ENCODE measurements at regions of chr15 and their contacts with region 1.

Region 1: DNA sequence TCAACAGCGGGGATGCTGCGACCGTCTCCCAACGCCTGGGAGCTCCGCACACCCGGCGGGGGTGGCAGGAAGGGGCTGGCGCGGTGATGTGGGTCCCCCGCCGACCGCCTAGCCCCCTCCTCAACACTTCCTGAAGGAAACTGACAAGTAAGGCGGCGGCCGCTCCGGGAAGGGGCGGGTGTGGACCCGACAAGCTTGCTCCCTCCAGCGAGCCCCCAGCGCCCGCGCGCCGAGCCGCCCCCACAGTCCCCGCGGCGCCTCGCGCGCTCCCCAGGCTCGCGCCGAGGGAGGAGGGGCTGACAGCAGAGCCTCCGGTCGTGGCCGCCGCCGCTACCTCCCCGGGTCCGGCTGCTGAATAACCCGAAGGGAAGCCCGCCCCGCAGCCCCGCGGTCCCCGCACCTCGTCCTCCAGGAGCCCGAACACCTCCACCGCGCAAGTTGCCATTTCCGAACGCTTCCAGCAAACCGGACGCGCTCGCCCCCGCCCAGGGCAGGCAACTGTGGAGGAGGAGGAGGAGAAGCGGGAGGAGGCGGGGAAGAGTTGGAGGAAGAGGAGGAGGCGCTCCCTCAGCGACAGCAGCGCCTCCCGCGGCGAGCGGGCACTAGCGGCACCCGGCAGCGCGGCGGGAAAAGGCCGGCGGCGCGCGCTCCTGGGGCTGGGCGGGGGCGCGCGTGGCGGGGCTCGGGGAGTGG is at the start of gene NEDD4:
- DNase-seq: peak; percentile 93
- H3K4me3 ChIP-seq: peak within 1 kb of the TSS; percentile 81 to 92 (median 86)
- H3K27ac ChIP-seq: peak within 1 kb of the TSS; percentile 91 to 97 (median 97)
- H3K4me1 ChIP-seq: peaks cover 0 to 23% (median 18%) of the 10 kb centered on the region in 4 donors
- H3K27me3 ChIP-seq: no peaks in the 10 kb centered on the region
- CTCF ChIP-seq: peak; percentile 17 to 42 (median 23)
- EP300 ChIP-seq: no peak
- POLR2A ChIP-seq: peak in 1 of 2 donors; percentile 25
- total RNA-seq, gene NEDD4: 19.4 to 28.6 (median 25.4) TPM

Region 2: GRCh38 chr15:55606214-55606613 is 387.0 kb before region 1 on chr15:
- intact Hi-C with region 1: no loop called
- DNase-seq: no peak
- H3K4me3 ChIP-seq: no peak overlapping the region
- H3K27ac ChIP-seq: no peak overlapping the region
- H3K4me1 ChIP-seq: no peaks in the 10 kb centered on the region
- H3K27me3 ChIP-seq: no peaks in the 10 kb centered on the region
- CTCF ChIP-seq: no peak
- EP300 ChIP-seq: no peak
- POLR2A ChIP-seq: no peak

Region 3: DNA sequence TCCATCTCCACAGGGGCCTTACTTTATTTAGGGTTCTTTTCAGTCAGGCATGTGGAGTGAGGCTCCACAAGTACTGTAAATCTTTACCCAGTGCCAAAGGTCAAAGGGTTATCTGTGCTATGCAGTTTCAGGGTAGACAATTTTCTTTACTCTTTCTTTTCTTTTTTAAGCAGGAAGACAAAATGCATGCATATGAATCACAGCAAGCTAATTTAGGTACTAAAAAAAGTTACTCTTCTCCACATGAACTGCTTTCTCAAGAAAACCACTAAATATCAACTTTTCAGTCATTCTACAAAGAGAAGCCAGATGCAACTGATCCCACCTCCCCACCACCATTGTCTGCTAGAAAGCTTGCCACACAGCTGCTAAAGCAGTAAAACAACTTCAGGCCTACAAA is 331.8 kb before region 1 on chr15:
- intact Hi-C with region 1: no loop called
- DNase-seq: no peak
- H3K4me3 ChIP-seq: no peak overlapping the region
- H3K27ac ChIP-seq: no peak overlapping the region
- H3K4me1 ChIP-seq: no peaks in the 10 kb centered on the region
- H3K27me3 ChIP-seq: no peaks in the 10 kb centered on the region
- CTCF ChIP-seq: no peak
- EP300 ChIP-seq: no peak
- POLR2A ChIP-seq: no peak

Region 4: GRCh38 chr15:55917881-55918296 is 75.4 kb before region 1 on chr15:
- intact Hi-C with region 1: loop called (anchors 5 kb)
- DNase-seq: no peak
- H3K4me3 ChIP-seq: no peak overlapping the region
- H3K27ac ChIP-seq: peak overlapping the region in 2 of 4 donors; percentile 55 to 59
- H3K4me1 ChIP-seq: peaks cover 0 to 30% (median 23%) of the 10 kb centered on the region in 4 donors
- H3K27me3 ChIP-seq: no peaks in the 10 kb centered on the region
- CTCF ChIP-seq: peak in 3 of 4 experiments; percentile 34 to 51 (median 38)
- EP300 ChIP-seq: no peak
- POLR2A ChIP-seq: no peak

Region 5: DNA sequence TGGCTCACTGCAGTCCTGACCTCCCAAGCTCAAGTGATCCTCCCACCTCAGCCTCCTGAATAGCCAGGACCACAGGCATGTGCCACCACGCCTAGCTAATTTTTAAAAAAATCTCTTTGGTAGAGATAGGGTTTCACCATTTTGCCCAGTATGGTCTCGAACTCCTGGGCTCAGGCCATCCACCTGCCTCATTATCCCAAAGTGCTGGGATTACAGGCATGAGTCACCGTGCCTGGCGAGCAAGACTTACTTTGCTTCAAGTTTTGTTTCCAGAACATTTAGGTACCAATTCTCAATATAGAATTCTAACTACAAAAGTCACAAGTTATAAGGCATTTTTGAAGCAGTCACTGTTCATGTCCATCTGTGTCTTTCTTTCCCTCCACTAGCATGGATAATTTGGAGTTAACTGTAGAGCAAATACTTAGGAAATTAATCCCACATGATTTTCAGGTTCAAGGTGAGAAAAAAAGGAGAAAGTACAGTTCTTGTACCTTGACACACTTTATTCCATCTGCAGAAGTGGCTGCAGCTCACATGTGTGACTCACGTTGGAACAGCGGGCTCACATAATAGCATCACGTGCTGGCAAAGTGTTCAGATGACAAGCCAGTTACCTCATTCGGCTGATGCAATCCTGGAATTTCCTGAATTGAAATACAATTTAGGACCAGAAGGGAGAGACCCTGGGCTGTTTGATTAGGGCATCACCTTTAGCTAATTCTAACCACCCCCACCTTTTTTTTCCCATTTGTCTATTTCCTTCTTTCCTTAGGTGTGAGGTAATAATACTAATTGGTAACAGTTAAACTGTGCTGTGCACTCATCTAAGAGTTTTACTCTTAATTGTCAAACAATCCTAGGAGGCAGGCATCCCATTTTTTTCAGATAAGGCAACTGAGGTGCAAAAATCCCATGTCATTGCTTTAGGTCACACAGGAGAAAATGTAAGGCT is 47.1 kb after region 1 on chr15:
- intact Hi-C with region 1: loop called (anchors 5 kb)
- DNase-seq: peak; percentile 87
- H3K4me3 ChIP-seq: no peak overlapping the region
- H3K27ac ChIP-seq: peak overlapping the region; percentile 14 to 70 (median 42)
- H3K4me1 ChIP-seq: peaks cover 0 to 11% (median 2%) of the 10 kb centered on the region in 4 donors
- H3K27me3 ChIP-seq: no peaks in the 10 kb centered on the region
- CTCF ChIP-seq: no peak
- EP300 ChIP-seq: peak in 2 of 4 donors; percentile 43 to 57
- POLR2A ChIP-seq: no peak

Region 6: GRCh38 chr15:56440214-56440770 is 447.0 kb after region 1 on chr15:
- intact Hi-C with region 1: no loop called
- DNase-seq: no peak
- H3K4me3 ChIP-seq: no peak overlapping the region
- H3K27ac ChIP-seq: no peak overlapping the region
- H3K4me1 ChIP-seq: no peaks in the 10 kb centered on the region
- H3K27me3 ChIP-seq: no peaks in the 10 kb centered on the region
- CTCF ChIP-seq: no peak
- EP300 ChIP-seq: no peak
- POLR2A ChIP-seq: no peak

Measured in sigmoid colon (tissue), 7 donors.